ENCODE measurements at regions of chr17 and their contacts with region 1.

Region 1: GRCh38 chr17:29777663-29778062 is 152.4 kb downstream of the SSH2 start:
- DNase-seq: no peak
- H3K4me3 ChIP-seq: no peak overlapping the region
- H3K27ac ChIP-seq: no peak overlapping the region
- H3K4me1 ChIP-seq: peaks cover 6% of the 10 kb centered on the region
- H3K27me3 ChIP-seq: no peaks in the 10 kb centered on the region
- CTCF ChIP-seq: no peak
- POLR2A ChIP-seq: no peak

Region 2: GRCh38 chr17:29653995-29654714 is 123.5 kb before region 1 on chr17:
- CTCF ChIA-PET with region 1: interaction called, 15 read pairs
- POLR2A ChIA-PET with region 1: no interaction called
- dilution Hi-C with region 1: no loop called
- intact Hi-C with region 1: no loop called
- DNase-seq: no peak
- H3K4me3 ChIP-seq: no peak overlapping the region
- H3K27ac ChIP-seq: no peak overlapping the region
- H3K4me1 ChIP-seq: no peaks in the 10 kb centered on the region
- H3K27me3 ChIP-seq: no peaks in the 10 kb centered on the region
- CTCF ChIP-seq: no peak
- POLR2A ChIP-seq: no peak

Region 3: GRCh38 chr17:29682054-29682453 is 95.6 kb before region 1 on chr17:
- CTCF ChIA-PET with region 1: interaction called, 13 read pairs
- POLR2A ChIA-PET with region 1: interaction called, 5 read pairs
- dilution Hi-C with region 1: no loop called
- intact Hi-C with region 1: no loop called
- DNase-seq: peak; percentile 41
- H3K4me3 ChIP-seq: no peak overlapping the region
- H3K27ac ChIP-seq: peak overlapping the region; percentile 91
- H3K4me1 ChIP-seq: peaks cover 33% of the 10 kb centered on the region
- H3K27me3 ChIP-seq: no peaks in the 10 kb centered on the region
- CTCF ChIP-seq: no peak
- POLR2A ChIP-seq: no peak

Region 4: DNA sequence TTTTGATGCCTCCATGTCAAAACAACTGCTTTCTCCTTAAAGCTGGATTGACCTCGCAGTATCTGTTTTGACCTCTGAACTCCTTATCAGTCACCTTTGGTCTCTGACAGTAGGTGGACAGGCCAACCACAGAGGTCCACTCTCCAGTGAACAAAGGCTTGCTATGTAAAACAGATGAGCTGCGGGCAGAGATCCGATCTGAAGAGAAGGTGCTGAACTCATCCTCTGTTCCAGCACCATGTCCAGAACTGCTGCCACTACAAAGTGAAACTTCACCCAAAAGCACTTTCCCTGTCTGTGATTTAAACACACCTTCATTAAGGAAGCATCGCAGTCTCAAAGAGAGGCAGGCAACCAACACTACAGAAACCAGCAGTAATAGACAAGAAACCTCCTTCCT is 37.6 kb before region 1 on chr17:
- CTCF ChIA-PET with region 1: interaction called, 10 read pairs
- POLR2A ChIA-PET with region 1: interaction called, 6 read pairs
- dilution Hi-C with region 1: no loop called
- intact Hi-C with region 1: no loop called
- DNase-seq: peak; percentile 12
- H3K4me3 ChIP-seq: no peak overlapping the region
- H3K27ac ChIP-seq: no peak overlapping the region
- H3K4me1 ChIP-seq: peaks cover 42% of the 10 kb centered on the region
- H3K27me3 ChIP-seq: no peaks in the 10 kb centered on the region
- CTCF ChIP-seq: no peak
- POLR2A ChIP-seq: no peak

Region 5: DNA sequence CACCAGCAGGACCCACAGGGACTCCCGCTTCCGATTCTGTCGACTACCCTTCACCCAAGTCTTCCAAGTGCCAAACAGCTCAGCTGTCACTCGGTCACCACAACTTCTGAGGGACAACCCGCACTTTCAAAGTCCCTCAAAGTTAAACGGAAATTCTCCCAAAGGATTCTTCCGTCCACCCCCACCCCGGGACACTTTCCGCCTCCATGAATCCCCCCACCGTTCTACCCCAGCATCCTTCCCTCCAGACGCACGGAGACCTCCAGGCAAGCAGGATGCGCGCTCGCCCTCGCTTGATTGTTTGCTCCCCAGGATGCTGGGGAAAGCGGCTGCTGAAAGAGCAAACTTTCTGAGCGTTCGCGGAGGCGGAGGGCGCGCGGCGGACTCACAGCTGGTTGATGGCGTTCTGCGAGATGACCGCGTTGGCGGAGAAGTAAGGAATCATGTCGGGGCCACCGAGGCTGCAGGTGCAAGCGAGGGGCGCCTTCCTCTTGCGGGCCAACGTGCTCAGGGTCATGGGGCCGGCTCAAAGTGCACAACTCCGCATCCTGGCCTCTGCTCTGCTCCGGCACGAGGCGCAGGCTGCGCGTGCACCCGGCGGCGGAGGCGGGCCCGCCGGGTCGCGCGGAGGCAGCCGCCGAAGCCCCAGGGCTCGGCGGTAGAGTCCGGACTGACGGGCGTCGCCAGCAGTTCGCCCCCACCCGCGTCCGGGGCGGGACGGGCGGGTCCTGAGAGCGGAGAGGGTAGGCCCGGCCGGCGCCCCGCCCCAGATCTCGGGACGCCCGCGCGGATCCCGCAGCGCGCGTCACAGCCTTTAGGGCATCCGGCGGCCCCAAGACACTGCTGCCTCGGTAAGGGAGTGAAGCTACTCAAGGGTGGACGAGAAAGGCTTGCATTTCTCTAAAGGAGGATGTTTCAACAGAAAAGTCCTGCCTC is 16.6 kb before region 1 on chr17:
- CTCF ChIA-PET with region 1: interaction called, 42 read pairs
- POLR2A ChIA-PET with region 1: interaction called, 4 read pairs
- dilution Hi-C with region 1: no loop called
- intact Hi-C with region 1: no loop called
- DNase-seq: peak; percentile 89
- H3K4me3 ChIP-seq: peak overlapping the region; percentile 56 to 93 (median 89)
- H3K27ac ChIP-seq: peak overlapping the region; percentile 84
- H3K4me1 ChIP-seq: peaks cover 11% of the 10 kb centered on the region
- H3K27me3 ChIP-seq: no peaks in the 10 kb centered on the region
- CTCF ChIP-seq: no peak
- POLR2A ChIP-seq: peak; percentile 90

Region 6: DNA sequence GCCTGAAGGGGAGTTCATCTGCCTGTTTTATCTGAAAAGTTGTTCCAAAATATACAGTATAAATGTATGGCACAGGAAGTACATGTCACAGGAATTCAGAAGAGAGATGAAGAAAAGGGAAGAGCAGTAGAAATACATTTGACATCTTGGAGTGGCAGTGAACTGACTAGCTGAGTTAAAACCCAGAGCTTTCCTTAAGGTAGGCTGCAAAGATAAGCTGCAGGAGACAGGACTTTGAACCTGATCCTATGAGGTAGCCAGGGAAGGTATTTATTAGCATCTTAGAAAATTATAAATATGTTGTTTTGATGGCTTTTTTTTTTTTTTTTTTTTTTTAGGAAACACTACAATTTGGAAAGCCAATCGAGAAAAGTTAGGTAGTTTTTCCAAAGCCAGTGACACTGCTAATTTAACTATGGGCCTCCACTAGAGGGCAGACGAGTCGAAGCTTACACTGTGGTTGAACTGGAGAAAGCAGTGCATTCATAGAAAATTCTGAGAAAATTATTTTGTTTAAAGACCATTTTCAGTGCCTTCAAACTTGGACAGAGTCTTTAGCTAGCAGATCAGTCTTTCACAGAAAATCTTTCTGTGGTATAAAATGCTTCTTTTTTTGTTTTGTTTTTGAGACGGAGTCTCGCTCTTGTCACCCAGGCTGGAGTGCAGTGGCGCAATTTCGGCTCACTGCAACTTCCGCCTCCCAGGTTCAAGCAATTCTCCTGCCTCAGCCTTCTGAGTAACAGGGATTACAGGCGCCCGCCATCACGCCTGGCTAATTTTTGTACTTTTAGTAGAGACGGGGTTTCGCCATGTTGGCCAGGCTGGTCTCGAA is 30.1 kb after region 1 on chr17:
- CTCF ChIA-PET with region 1: interaction called, 16 read pairs
- POLR2A ChIA-PET with region 1: no interaction called
- dilution Hi-C with region 1: no loop called
- intact Hi-C with region 1: no loop called
- DNase-seq: peak; percentile 67
- H3K4me3 ChIP-seq: no peak overlapping the region
- H3K27ac ChIP-seq: no peak overlapping the region
- H3K4me1 ChIP-seq: no peaks in the 10 kb centered on the region
- H3K27me3 ChIP-seq: no peaks in the 10 kb centered on the region
- CTCF ChIP-seq: peak; percentile 61 to 64
- POLR2A ChIP-seq: no peak

Region 7: DNA sequence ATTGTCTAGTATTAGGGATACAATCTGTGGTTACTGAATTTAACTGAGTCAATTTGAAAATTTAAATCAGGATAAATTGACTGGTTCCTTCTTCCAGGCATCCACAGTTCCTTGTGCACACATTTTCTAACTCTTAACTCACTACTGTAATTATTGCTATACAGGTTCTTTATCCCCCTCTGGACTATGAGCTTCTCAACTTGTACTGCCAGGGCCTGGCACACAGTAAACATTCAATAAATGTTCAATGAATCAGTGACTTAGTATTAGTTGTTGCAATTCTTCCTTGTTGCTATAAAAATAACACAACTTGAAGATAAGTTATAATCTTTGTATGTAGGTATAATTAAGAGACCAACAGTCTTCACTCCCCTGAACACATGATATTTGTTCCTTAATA is 84.5 kb after region 1 on chr17:
- CTCF ChIA-PET with region 1: no interaction called
- POLR2A ChIA-PET with region 1: no interaction called
- dilution Hi-C with region 1: no loop called
- intact Hi-C with region 1: no loop called
- DNase-seq: no peak
- H3K4me3 ChIP-seq: no peak overlapping the region
- H3K27ac ChIP-seq: no peak overlapping the region
- H3K4me1 ChIP-seq: no peaks in the 10 kb centered on the region
- H3K27me3 ChIP-seq: no peaks in the 10 kb centered on the region
- CTCF ChIP-seq: no peak
- POLR2A ChIP-seq: no peak

Region 8: GRCh38 chr17:29891131-29891530 is 113.5 kb after region 1 on chr17:
- CTCF ChIA-PET with region 1: no interaction called
- POLR2A ChIA-PET with region 1: no interaction called
- dilution Hi-C with region 1: no loop called
- intact Hi-C with region 1: no loop called
- DNase-seq: no peak
- H3K4me3 ChIP-seq: no peak overlapping the region
- H3K27ac ChIP-seq: no peak overlapping the region
- H3K4me1 ChIP-seq: peaks cover 11% of the 10 kb centered on the region
- H3K27me3 ChIP-seq: no peaks in the 10 kb centered on the region
- CTCF ChIP-seq: no peak
- POLR2A ChIP-seq: no peak

Measured in endothelial cell of umbilical vein (primary cell).